ENCODE measurements at regions of chr11 and their contacts with region 1.

Region 1: GRCh38 chr11:57644748-57645688 is 4.7 kb downstream of the YPEL4 start:
- DNase-seq: peak; percentile 74 to 89 (median 78)
- H3K4me3 ChIP-seq: no peak overlapping the region
- H3K4me3 Mint-ChIP-seq: peak overlapping the region in 1 of 7 donors; percentile 53
- H3K27ac ChIP-seq: no peak overlapping the region
- H3K27ac Mint-ChIP-seq: peak overlapping the region in 3 of 8 donors; percentile 31 to 61 (median 54)
- H3K4me1 ChIP-seq: peaks cover 12% of the 10 kb centered on the region
- H3K4me1 Mint-ChIP-seq: peaks cover 20 to 42% (median 25%) of the 10 kb centered on the region in 3 donors
- H3K27me3 ChIP-seq: peaks cover 34% of the 10 kb centered on the region
- H3K27me3 Mint-ChIP-seq: peaks cover 38 to 54% of the 10 kb centered on the region in 2 donors

Region 2: GRCh38 chr11:57345555-57346211 is 299.3 kb before region 1 on chr11:
- CTCF ChIA-PET with region 1: interaction called, 21 read pairs
- POLR2A ChIA-PET with region 1: no interaction called
- DNase-seq: peak; percentile 50 to 76 (median 62)
- H3K4me3 ChIP-seq: no peak overlapping the region
- H3K4me3 Mint-ChIP-seq: no peak overlapping the region
- H3K27ac ChIP-seq: no peak overlapping the region
- H3K27ac Mint-ChIP-seq: no peak overlapping the region
- H3K4me1 ChIP-seq: no peaks in the 10 kb centered on the region
- H3K4me1 Mint-ChIP-seq: peaks cover 0 to 5% (median 3%) of the 10 kb centered on the region in 3 donors
- H3K27me3 ChIP-seq: no peaks in the 10 kb centered on the region
- H3K27me3 Mint-ChIP-seq: peaks cover 0 to 4% of the 10 kb centered on the region in 2 donors

Region 3: GRCh38 chr11:57358543-57358961 is 286.5 kb before region 1 on chr11:
- CTCF ChIA-PET with region 1: no interaction called
- POLR2A ChIA-PET with region 1: no interaction called
- DNase-seq: no peak
- H3K4me3 ChIP-seq: no peak overlapping the region
- H3K4me3 Mint-ChIP-seq: no peak overlapping the region
- H3K27ac ChIP-seq: no peak overlapping the region
- H3K27ac Mint-ChIP-seq: no peak overlapping the region
- H3K4me1 ChIP-seq: no peaks in the 10 kb centered on the region
- H3K4me1 Mint-ChIP-seq: no peaks in the 10 kb centered on the region
- H3K27me3 ChIP-seq: no peaks in the 10 kb centered on the region
- H3K27me3 Mint-ChIP-seq: peaks cover 1 to 29% of the 10 kb centered on the region in 2 donors

Region 4: DNA sequence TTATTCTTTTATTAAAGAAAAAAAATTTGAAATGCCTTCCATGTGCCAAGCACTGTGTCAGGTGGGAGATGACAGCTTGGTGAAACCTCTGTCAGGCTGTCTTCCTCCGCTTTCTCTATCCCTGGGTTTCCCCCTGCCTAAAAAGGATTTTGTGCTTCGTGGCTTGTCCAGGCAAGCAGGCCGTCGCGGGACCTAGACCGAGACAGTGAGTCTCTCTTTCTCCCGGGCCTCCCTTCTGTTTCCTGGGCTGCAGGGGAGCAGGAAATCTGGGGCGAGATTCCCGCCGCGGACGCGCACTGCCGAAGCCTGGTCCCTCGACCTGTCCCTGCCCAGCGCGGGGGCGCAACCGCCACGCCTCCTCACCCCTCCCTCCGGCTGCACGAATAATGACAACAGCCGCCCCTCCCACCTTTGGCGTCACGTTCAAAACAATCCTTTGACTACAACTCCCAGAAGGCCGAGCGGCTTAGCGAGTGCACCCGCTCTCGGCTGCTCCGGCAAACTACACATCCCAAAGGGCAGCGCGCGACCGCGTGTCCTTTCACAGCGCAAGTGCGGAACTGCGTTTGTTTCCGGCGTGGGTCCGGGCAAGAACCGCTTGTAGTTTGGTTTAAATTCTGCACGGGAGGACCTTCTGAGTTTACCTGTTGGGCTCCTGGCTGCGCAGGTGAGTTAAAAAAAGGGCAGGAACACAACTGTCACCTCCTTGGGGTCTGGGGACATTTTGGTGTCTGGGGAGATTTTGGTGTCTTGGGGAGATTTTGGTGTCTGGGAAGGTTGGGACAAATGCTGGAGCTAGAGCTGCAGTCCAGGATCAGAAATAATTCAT is 12.4 kb after region 1 on chr11 and contains the start of gene CLP1:
- CTCF ChIA-PET with region 1: interaction called, 15 read pairs
- POLR2A ChIA-PET with region 1: interaction called, 5 read pairs
- DNase-seq: peak; percentile 98 to 99 (median 99)
- H3K4me3 ChIP-seq: peak within 1 kb of the TSS; percentile 95
- H3K4me3 Mint-ChIP-seq: peak within 1 kb of the TSS; percentile 92 to 98 (median 96)
- H3K27ac ChIP-seq: peak within 1 kb of the TSS; percentile 92
- H3K27ac Mint-ChIP-seq: peak within 1 kb of the TSS; percentile 91 to 99 (median 98)
- H3K4me1 ChIP-seq: peaks cover 13% of the 10 kb centered on the region
- H3K4me1 Mint-ChIP-seq: peaks cover 27 to 52% (median 43%) of the 10 kb centered on the region in 3 donors
- H3K27me3 ChIP-seq: no peaks in the 10 kb centered on the region
- H3K27me3 Mint-ChIP-seq: no peaks in the 10 kb centered on the region
- total RNA-seq, gene CLP1: 22.4 to 23.4 TPM

Region 5: DNA sequence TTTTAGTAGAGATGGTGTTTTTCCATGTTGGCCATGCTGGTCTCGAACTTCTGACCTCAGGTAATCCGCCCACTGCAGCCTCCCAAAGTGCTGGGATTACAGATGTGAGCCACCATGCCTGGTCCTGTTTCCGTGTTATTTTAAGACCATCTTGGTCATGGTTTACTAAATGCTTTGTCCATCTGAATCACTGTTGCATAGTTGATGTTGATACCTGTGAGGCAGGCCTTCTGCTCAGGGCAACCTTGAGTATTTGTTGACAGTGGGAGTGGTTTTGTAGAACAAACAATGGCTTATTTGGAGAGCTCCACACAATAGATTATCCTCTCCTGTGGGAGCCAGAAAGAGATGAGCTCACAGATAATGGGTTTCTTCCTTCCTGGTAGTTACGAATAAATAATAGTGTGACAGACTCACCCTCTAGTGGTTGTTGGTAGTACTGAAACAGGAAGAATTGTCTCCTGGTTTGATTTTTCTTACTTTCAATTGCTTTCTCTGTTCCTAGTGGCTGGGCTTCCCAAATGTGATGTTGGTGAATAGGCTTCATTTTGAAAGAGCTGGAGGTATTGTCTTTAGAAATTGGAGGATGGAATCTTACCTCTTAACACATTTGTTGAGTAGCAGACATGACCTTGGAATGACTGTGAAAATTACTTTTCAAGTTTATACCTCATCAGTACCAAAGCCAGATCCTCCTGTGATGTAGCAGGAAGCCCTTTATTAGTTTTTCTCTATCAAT is 155.6 kb after region 1 on chr11:
- CTCF ChIA-PET with region 1: interaction called, 20 read pairs
- POLR2A ChIA-PET with region 1: no interaction called
- DNase-seq: peak in 2 of 5 donors; percentile 57 to 65
- H3K4me3 ChIP-seq: no peak overlapping the region
- H3K4me3 Mint-ChIP-seq: peak overlapping the region in 2 of 7 donors; percentile 15 to 41
- H3K27ac ChIP-seq: no peak overlapping the region
- H3K27ac Mint-ChIP-seq: peak overlapping the region; percentile 30 to 92 (median 86)
- H3K4me1 ChIP-seq: peaks cover 22% of the 10 kb centered on the region
- H3K4me1 Mint-ChIP-seq: peaks cover 11 to 21% (median 13%) of the 10 kb centered on the region in 3 donors
- H3K27me3 ChIP-seq: no peaks in the 10 kb centered on the region
- H3K27me3 Mint-ChIP-seq: peaks cover 0 to 2% of the 10 kb centered on the region in 2 donors